ENCODE measurements at regions of chr1 and their contacts with region 1.

Region 1: GRCh38 chr1:40774266-40774998 is 9.2 kb upstream of the KCNQ4 start:
- DNase-seq: peak; percentile 46 to 70 (median 54)
- ATAC-seq: peak; percentile 72
- H3K4me3 ChIP-seq: no peak overlapping the region
- H3K4me3 Mint-ChIP-seq: no peak overlapping the region
- H3K27ac ChIP-seq: no peak overlapping the region
- H3K27ac Mint-ChIP-seq: peak overlapping the region in 3 of 9 donors; percentile 1 to 61 (median 10)
- H3K4me1 ChIP-seq: no peaks in the 10 kb centered on the region
- H3K4me1 Mint-ChIP-seq: peaks cover 0 to 25% (median 2%) of the 10 kb centered on the region in 7 donors
- H3K27me3 ChIP-seq: no peaks in the 10 kb centered on the region
- H3K27me3 Mint-ChIP-seq: no peaks in the 10 kb centered on the region

Region 2: GRCh38 chr1:40612345-40612831 is 162.0 kb before region 1 on chr1:
- CTCF ChIA-PET with region 1: no interaction called
- POLR2A ChIA-PET with region 1: no interaction called
- intact Hi-C with region 1: loop called (anchors 1 to 5 kb)
- DNase-seq: peak in 8 of 9 donors; percentile 45 to 75 (median 68)
- ATAC-seq: peak; percentile 94
- H3K4me3 ChIP-seq: no peak overlapping the region
- H3K4me3 Mint-ChIP-seq: no peak overlapping the region
- H3K27ac ChIP-seq: no peak overlapping the region
- H3K27ac Mint-ChIP-seq: no peak overlapping the region
- H3K4me1 ChIP-seq: no peaks in the 10 kb centered on the region
- H3K4me1 Mint-ChIP-seq: peaks cover 0 to 4% (median 0%) of the 10 kb centered on the region in 7 donors
- H3K27me3 ChIP-seq: no peaks in the 10 kb centered on the region
- H3K27me3 Mint-ChIP-seq: peaks cover 0 to 7% (median 0%) of the 10 kb centered on the region in 5 donors

Region 3: GRCh38 chr1:40796939-40797667 is 22.7 kb after region 1 on chr1:
- CTCF ChIA-PET with region 1: interaction called, 40 read pairs
- POLR2A ChIA-PET with region 1: interaction called, 4 read pairs
- intact Hi-C with region 1: no loop called
- DNase-seq: no peak
- ATAC-seq: no peak
- H3K4me3 ChIP-seq: peak overlapping the region; percentile 10
- H3K4me3 Mint-ChIP-seq: peak overlapping the region; percentile 51 to 87 (median 66)
- H3K27ac ChIP-seq: no peak overlapping the region
- H3K27ac Mint-ChIP-seq: peak overlapping the region; percentile 32 to 90 (median 70)
- H3K4me1 ChIP-seq: peaks cover 17 to 29% of the 10 kb centered on the region in 2 donors
- H3K4me1 Mint-ChIP-seq: peaks cover 22 to 60% (median 55%) of the 10 kb centered on the region in 7 donors
- H3K27me3 ChIP-seq: no peaks in the 10 kb centered on the region
- H3K27me3 Mint-ChIP-seq: peaks cover 0 to 5% (median 0%) of the 10 kb centered on the region in 5 donors

Region 4: DNA sequence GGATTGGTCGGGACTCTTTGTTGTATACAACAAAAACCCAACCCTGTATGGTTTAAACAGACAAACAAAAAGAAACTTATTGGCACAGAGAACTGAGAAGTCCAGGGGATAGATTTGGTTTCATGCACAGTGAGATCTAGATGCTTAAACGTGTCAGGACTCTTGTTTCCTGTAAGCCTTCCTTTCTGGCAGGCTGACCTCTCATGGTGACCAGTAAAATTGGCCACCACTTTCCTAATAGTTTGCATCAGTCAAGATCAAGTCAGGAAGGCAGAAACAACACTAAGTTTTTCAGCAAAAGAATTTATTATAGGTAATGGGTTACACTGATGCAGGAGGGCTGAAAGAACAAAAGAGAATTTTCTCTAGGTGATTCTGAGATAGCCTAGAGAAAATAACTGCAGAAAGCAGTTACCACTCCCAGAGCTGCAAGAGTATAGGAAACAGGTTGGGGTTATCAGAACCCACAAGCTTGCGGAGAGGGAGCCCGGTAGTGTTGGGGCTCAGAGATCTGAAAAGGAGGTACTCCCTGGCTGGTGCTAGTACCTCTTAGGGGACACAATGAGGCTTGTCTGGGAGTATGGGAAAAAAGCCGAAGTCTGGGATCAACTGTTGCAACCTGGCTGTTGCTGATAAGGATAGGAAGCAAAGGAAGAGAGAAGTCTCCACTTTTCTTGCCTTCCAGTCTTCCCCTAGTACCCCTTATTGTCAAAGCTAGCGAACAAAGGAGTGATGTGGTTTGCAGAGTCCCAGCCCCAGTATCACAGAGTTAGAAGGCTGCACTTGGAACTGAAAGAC is 66.3 kb after region 1 on chr1:
- CTCF ChIA-PET with region 1: interaction called, 106 read pairs
- POLR2A ChIA-PET with region 1: interaction called, 4 read pairs
- intact Hi-C with region 1: loop called in 1 of 2 experiments (anchors 1 kb)
- DNase-seq: peak in 6 of 9 donors; percentile 20 to 62 (median 52)
- ATAC-seq: peak; percentile 71
- H3K4me3 ChIP-seq: no peak overlapping the region
- H3K4me3 Mint-ChIP-seq: peak overlapping the region; percentile 16 to 78 (median 64)
- H3K27ac ChIP-seq: peak overlapping the region; percentile 2
- H3K27ac Mint-ChIP-seq: peak overlapping the region; percentile 19 to 84 (median 65)
- H3K4me1 ChIP-seq: peaks cover 3 to 26% of the 10 kb centered on the region in 2 donors
- H3K4me1 Mint-ChIP-seq: peaks cover 20 to 44% (median 39%) of the 10 kb centered on the region in 7 donors
- H3K27me3 ChIP-seq: no peaks in the 10 kb centered on the region
- H3K27me3 Mint-ChIP-seq: peaks cover 0 to 5% (median 0%) of the 10 kb centered on the region in 5 donors

Region 5: GRCh38 chr1:41003640-41004220 is 229.3 kb after region 1 on chr1:
- CTCF ChIA-PET with region 1: interaction called, 5 read pairs
- POLR2A ChIA-PET with region 1: no interaction called
- intact Hi-C with region 1: loop called in 1 of 2 experiments (anchors 10 kb)
- DNase-seq: peak; percentile 52 to 90 (median 85)
- ATAC-seq: peak; percentile 99
- H3K4me3 ChIP-seq: no peak overlapping the region
- H3K4me3 Mint-ChIP-seq: peak overlapping the region in 7 of 10 donors; percentile 17 to 59 (median 36)
- H3K27ac ChIP-seq: peak overlapping the region; percentile 5
- H3K27ac Mint-ChIP-seq: peak overlapping the region in 8 of 9 donors; percentile 22 to 79 (median 60)
- H3K4me1 ChIP-seq: peaks cover 9 to 12% of the 10 kb centered on the region in 2 donors
- H3K4me1 Mint-ChIP-seq: peaks cover 12 to 26% (median 22%) of the 10 kb centered on the region in 7 donors
- H3K27me3 ChIP-seq: no peaks in the 10 kb centered on the region
- H3K27me3 Mint-ChIP-seq: no peaks in the 10 kb centered on the region

Region 6: DNA sequence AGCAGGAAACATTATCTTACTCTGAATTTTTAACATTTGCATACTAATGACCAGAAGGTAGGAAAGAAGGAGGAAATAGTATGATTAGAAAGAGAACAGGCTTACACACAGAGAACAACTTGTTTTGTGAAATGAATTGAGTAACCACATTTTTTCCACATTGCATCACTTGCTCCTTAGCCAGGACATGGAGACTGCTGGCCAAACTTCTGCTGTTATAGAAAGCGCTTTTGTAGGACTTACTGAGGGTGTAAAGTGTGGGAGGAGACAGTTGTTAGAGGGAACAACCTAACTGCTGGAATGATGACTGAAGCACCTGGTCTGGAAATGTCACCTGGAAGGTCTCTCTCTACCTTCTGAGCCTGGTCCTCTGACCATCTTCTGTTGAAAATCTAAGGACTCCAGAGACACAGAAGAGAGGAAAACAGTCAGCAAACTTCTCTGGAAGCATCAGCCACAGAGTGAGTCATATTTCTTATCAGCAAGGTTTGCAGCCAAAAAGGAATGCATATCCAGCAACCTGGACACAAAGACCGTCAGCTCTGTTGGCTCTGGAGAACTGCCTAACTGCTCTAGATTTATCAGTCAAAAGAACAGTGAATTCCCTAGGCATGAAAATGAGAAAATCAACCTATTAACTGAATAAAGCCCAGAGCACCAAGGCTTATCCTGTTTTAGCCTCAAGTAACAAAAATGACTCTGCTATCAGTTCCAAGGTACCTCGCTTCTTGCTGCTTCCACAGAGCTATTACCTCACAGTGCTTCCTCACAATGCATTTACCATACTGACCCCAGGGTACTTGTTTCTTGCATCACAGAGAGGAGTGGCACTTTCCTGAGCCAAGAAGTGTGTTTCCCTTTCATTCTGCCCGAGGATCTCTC is 335.1 kb after region 1 on chr1:
- CTCF ChIA-PET with region 1: no interaction called
- POLR2A ChIA-PET with region 1: no interaction called
- intact Hi-C with region 1: no loop called
- DNase-seq: no peak
- ATAC-seq: peak; percentile 40
- H3K4me3 ChIP-seq: no peak overlapping the region
- H3K4me3 Mint-ChIP-seq: no peak overlapping the region
- H3K27ac ChIP-seq: no peak overlapping the region
- H3K27ac Mint-ChIP-seq: no peak overlapping the region
- H3K4me1 ChIP-seq: no peaks in the 10 kb centered on the region
- H3K4me1 Mint-ChIP-seq: peaks cover 0 to 1% (median 0%) of the 10 kb centered on the region in 7 donors
- H3K27me3 ChIP-seq: no peaks in the 10 kb centered on the region
- H3K27me3 Mint-ChIP-seq: no peaks in the 10 kb centered on the region